ENCODE measurements at regions of chr17 and their contacts with region 1.

Region 1: DNA sequence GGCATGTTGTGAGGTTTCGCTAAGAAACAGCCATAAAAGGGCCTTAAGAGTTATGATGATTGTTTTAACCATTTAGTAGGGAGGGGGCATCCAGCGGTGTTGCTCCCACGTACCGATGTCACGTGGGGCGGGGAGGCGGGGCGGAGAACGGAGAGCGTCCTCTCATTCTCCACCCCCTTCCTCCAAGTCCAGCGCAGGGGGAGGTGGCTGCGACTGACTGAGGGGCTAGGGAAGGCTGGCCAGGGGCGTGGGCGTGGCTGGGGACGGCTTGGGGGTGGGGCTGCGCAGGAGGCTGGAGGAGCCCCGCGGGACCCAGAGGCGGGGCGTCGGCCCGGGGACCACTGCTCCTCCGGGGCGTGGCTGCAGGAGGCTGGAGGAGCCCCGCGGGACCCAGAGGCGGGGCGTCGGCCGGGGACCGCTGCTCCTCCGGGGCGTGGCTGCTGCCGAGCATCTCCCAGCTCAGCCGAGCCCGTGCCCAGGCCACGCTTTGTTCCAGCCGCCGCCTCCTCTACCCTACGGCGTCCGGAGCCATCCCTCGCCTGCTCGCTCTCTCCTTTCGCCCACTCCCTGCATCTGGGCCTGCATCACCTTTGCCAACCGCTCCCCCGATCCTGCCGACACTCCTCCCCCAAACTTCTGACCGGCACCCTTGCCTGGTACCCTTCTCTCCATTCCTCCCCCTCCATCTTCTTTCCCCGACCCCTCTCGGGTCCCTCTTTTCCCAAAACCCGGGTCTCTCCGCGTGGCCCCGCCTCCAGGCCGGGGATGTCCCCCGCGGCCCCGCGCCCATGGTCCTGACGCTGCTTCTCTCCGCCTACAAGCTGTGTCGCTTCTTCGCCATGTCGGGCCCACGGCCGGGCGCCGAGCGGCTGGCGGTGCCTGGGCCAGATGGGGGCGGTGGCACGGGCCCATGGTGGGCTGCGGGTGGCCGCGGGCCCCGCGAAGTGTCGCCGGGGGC is at the start of gene SARM1:
- DNase-seq: peak; percentile 30
- ATAC-seq: peak; percentile 93
- H3K4me3 ChIP-seq: peak within 1 kb of the TSS; percentile 65 to 93
- H3K27ac ChIP-seq: peak within 1 kb of the TSS; percentile 84
- H3K4me1 ChIP-seq: peaks cover 27% of the 10 kb centered on the region
- H3K27me3 ChIP-seq: no peaks in the 10 kb centered on the region
- CTCF ChIP-seq: no peak
- total RNA-seq, gene SARM1: 17.4 TPM

Region 2: GRCh38 chr17:28399808-28400207 is 28.3 kb after region 1 on chr17:
- CTCF ChIA-PET with region 1: no interaction called
- POLR2A ChIA-PET with region 1: interaction called, 11 read pairs
- in situ Hi-C with region 1: no loop called
- intact Hi-C with region 1: no loop called
- DNase-seq: no peak
- ATAC-seq: no peak
- H3K4me3 ChIP-seq: no peak overlapping the region
- H3K27ac ChIP-seq: no peak overlapping the region
- H3K4me1 ChIP-seq: peaks cover 8% of the 10 kb centered on the region; the same call in 1 of the 2 replicates
- H3K27me3 ChIP-seq: no peaks in the 10 kb centered on the region
- CTCF ChIP-seq: no peak

Region 3: GRCh38 chr17:28509789-28510188 is 138.3 kb after region 1 on chr17:
- CTCF ChIA-PET with region 1: no interaction called
- POLR2A ChIA-PET with region 1: no interaction called
- in situ Hi-C with region 1: no loop called
- intact Hi-C with region 1: no loop called
- DNase-seq: no peak
- ATAC-seq: no peak
- H3K4me3 ChIP-seq: no peak overlapping the region
- H3K27ac ChIP-seq: no peak overlapping the region
- H3K4me1 ChIP-seq: no peaks in the 10 kb centered on the region
- H3K27me3 ChIP-seq: peaks cover 4% of the 10 kb centered on the region; the same call in 1 of the 2 replicates
- CTCF ChIP-seq: no peak